AG04450 (cell line): ENCODE measurements at regions of chr5 and their contacts with region 1.

Region 1: GRCh38 chr5:90409318-90410177 is at the start of gene CETN3:
- DNase-seq: peak; percentile 92
- H3K4me3 ChIP-seq: peak within 1 kb of the TSS; percentile 93
- H3K27ac ChIP-seq: peak within 1 kb of the TSS; percentile 91
- H3K27me3 ChIP-seq: no peaks in the 10 kb centered on the region
- CTCF ChIP-seq: no peak
- polyA plus RNA-seq, gene CETN3: 13.4 and 24.9 TPM in 2 replicates

Region 2: GRCh38 chr5:90440644-90441043 is 31.1 kb after region 1 on chr5:
- CTCF ChIA-PET with region 1: interaction called, 18 read pairs
- POLR2A ChIA-PET with region 1: no interaction called
- DNase-seq: no peak
- H3K4me3 ChIP-seq: no peak overlapping the region
- H3K27ac ChIP-seq: no peak overlapping the region
- H3K27me3 ChIP-seq: peaks cover 1% of the 10 kb centered on the region
- CTCF ChIP-seq: no peak

Region 3: DNA sequence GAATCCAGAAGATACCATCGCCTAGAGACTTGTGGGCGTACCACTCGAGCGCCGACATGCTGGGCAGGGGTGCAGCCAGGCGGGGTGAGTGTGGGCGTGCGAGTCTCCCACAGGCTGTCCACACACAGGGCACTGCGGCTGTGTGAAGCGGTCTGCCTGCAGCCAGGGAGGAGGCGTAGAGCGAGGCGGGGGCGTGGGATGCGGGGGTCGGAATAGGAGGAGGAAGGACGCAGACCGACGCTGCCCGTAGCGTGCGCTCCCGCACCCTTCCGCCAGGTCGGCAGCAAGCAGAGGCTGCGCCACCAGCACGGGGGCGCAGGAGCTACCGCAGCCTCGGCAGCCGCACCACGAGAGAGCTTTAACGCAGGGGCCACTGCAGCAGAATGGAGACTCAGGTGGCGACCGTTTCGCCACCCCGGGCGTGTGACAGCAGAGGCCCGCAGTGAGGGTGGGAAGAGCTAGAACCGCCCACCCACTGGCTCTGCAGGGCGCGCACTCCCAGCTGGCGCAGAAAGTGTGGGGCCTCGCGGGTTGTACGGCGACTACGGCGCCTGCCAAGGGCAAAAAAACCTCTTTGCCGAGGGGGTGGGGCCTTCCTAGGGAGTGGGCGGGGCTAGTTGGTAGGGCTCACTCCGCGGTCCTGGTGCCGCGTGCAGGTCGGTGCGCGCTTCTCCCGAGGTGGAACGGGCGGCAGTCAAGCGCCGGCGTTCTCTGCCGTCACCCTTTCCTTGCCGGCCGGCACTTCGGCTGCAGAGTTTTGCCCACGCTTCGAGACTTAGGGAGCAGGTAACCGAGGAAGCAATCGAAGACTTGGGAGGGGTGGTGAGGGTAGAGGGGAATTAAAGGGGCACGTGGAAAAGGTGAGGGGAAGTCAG is 64.9 kb after region 1 on chr5 and contains the starts of genes MBLAC2 and POLR3G:
- CTCF ChIA-PET with region 1: interaction called, 10 read pairs
- POLR2A ChIA-PET with region 1: interaction called, 7 read pairs
- DNase-seq: peak; percentile 69
- H3K4me3 ChIP-seq: peak within 1 kb of the TSS; percentile 86
- H3K27ac ChIP-seq: peak within 1 kb of the TSS; percentile 59
- H3K27me3 ChIP-seq: no peaks in the 10 kb centered on the region
- CTCF ChIP-seq: peak; percentile 61
- polyA plus RNA-seq, gene MBLAC2: 2.3 and 2.8 TPM in 2 replicates
- polyA plus RNA-seq, gene POLR3G: 4.7 and 7.3 TPM in 2 replicates

Region 4: GRCh38 chr5:90529194-90529938 is 119.8 kb after region 1 on chr5 and contains the start of gene LYSMD3:
- CTCF ChIA-PET with region 1: interaction called, 16 read pairs
- POLR2A ChIA-PET with region 1: interaction called, 3 read pairs
- DNase-seq: peak; percentile 94
- H3K4me3 ChIP-seq: peak within 1 kb of the TSS; percentile 94
- H3K27ac ChIP-seq: peak within 1 kb of the TSS; percentile 94
- H3K27me3 ChIP-seq: peaks cover 8% of the 10 kb centered on the region
- CTCF ChIP-seq: no peak
- polyA plus RNA-seq, gene LYSMD3: 15.6 and 25.8 TPM in 2 replicates